Adrenal gland (tissue), 19 donors: ENCODE measurements at regions of chr2 and their contacts with region 1.

Region 1: DNA sequence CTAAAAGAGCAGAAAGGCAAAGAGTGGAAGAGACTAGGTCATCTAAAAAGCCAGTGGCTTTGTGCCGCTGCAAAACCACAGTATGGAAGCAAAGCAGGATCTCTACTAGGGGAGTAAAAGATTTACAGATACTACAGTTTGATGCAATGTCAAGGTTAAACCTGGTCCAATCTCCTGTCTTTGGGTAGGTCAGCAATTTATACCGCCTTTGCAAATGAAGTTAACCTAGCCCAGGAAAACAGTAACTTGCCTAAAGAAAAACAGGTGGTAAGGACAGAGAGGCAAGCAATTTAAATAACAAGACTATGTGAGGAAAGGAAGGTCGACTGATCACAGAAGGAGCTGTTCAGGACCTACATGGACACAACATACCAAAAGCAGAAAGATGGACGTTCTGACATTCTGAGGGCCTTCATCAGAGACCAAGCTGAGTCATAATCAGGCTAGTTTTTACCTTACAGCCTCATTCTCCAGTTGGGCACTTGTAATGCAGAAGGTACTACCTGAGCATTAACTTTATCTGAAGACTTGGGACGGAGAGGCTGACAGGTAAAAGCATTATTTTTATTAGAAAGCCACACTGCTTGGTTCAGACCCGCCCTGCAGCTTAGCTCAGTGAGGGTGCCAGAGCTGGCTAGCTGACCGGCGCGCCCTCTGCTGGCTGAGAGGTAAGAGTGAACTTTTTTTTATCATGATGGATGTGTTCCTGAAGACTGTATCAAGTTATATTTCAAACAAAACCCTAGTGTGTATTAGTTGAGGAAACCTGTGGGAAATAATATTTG is 15.9 kb downstream of the CDKL4 start:
- DNase-seq: peak; percentile 67 to 89 (median 80)
- H3K4me3 ChIP-seq: peak overlapping the region in 1 of 4 donors; percentile 35
- H3K27ac ChIP-seq: no peak overlapping the region
- H3K4me1 ChIP-seq: peaks cover 4 to 8% of the 10 kb centered on the region in 2 donors
- H3K27me3 ChIP-seq: no peaks in the 10 kb centered on the region
- CTCF ChIP-seq: peak; percentile 78 to 93 (median 86)
- POLR2A ChIP-seq: no peak

Region 2: DNA sequence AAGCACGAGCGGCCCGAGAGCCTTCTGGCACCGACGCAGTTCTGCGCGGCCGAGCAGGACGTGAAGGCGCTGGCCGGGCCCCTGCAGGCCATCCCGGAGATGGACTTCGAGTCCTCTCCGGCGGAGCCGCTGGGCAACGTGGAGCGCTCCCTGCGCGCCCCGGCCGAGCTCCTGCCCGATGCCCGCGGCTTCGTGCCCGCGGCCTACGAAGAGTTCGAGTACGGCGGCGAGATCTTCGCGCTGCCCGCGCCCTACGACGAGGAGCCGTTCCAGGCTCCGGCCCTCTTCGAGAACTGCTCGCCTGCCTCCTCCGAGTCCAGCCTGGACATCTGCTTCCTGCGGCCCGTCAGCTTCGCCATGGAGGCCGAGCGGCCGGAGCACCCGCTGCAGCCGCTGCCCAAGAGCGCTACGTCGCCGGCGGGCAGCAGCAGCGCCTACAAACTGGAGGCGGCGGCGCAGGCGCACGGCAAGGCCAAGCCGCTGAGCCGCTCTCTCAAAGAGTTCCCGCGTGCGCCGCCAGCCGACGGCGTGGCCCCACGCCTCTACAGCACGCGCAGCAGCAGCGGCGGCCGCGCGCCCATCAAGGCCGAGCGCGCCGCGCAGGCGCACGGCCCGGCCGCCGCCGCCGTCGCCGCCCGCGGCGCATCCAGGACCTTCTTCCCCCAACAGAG is 267.7 kb before region 1 on chr2:
- intact Hi-C with region 1: loop called in 1 of 2 experiments (anchors 10 kb)
- DNase-seq: peak; percentile 81 to 89 (median 84)
- H3K4me3 ChIP-seq: peak overlapping the region in 2 of 4 donors; percentile 27 to 62
- H3K27ac ChIP-seq: peak overlapping the region in 2 of 5 donors; percentile 21 to 45
- H3K4me1 ChIP-seq: peaks cover 6% of the 10 kb centered on the region in 2 donors
- H3K27me3 ChIP-seq: no peaks in the 10 kb centered on the region
- CTCF ChIP-seq: peak in 1 of 6 experiments; percentile 32
- POLR2A ChIP-seq: peak in 1 of 2 donors; percentile 32

Region 3: DNA sequence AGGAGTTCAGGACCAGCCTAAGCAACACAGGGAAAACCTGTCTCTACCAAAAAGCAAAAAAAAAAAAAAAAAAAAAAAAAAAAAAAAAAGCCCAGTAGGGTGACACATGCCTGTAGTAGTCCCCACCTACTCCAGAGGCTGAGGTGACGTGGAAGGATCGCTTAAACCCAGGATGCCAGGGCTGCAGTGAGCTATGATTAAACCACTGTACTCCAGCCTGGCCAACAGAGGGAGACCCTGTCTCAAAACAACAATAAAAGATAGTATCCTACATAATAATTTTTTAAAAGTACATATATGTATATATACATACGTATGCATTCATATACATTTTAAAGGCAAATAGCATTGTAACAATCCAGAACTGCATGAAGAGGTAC is 158.7 kb before region 1 on chr2:
- intact Hi-C with region 1: loop called (anchors 5 kb)
- DNase-seq: no peak
- H3K4me3 ChIP-seq: no peak overlapping the region
- H3K27ac ChIP-seq: no peak overlapping the region
- H3K4me1 ChIP-seq: peaks cover 0 to 7% of the 10 kb centered on the region in 2 donors
- H3K27me3 ChIP-seq: no peaks in the 10 kb centered on the region
- CTCF ChIP-seq: no peak
- POLR2A ChIP-seq: no peak

Region 4: GRCh38 chr2:39124000-39124745 is 103.6 kb before region 1 on chr2:
- intact Hi-C with region 1: loop called in 1 of 2 experiments (anchors 10 kb)
- DNase-seq: peak; percentile 93 to 96 (median 94)
- H3K4me3 ChIP-seq: peak overlapping the region; percentile 40 to 94 (median 58)
- H3K27ac ChIP-seq: peak overlapping the region; percentile 33 to 94 (median 87)
- H3K4me1 ChIP-seq: peaks cover 13 to 30% of the 10 kb centered on the region in 2 donors
- H3K27me3 ChIP-seq: no peaks in the 10 kb centered on the region
- CTCF ChIP-seq: peak in 5 of 6 experiments; percentile 13 to 44 (median 38)
- POLR2A ChIP-seq: peak; percentile 53 to 63

Region 5: GRCh38 chr2:39368846-39369245 is 141.0 kb after region 1 on chr2:
- intact Hi-C with region 1: no loop called
- DNase-seq: no peak
- H3K4me3 ChIP-seq: no peak overlapping the region
- H3K27ac ChIP-seq: no peak overlapping the region
- H3K4me1 ChIP-seq: no peaks in the 10 kb centered on the region
- H3K27me3 ChIP-seq: no peaks in the 10 kb centered on the region
- CTCF ChIP-seq: no peak
- POLR2A ChIP-seq: no peak